Activated CD4-positive, alpha-beta T cell treated with anti-CD3 and anti-CD28 coated beads for 36 hours (primary cell): ENCODE measurements at regions of chr17 and their contacts with region 1.

Region 1: GRCh38 chr17:78019367-78019975 is 61.0 kb downstream of the TNRC6C start:
- DNase-seq: no peak
- ATAC-seq: no peak
- H3K4me3 Mint-ChIP-seq: no peak overlapping the region
- H3K27ac Mint-ChIP-seq: peak overlapping the region; percentile 35
- H3K4me1 Mint-ChIP-seq: peaks cover 33% of the 10 kb centered on the region
- H3K27me3 Mint-ChIP-seq: no peaks in the 10 kb centered on the region

Region 2: GRCh38 chr17:77834170-77835115 is 185.0 kb before region 1 on chr17:
- CTCF ChIA-PET with region 1: no interaction called
- POLR2A ChIA-PET with region 1: no interaction called
- intact Hi-C with region 1: loop called in 1 of 2 experiments (anchors 1 kb)
- DNase-seq: peak; percentile 88
- ATAC-seq: peak; percentile 79
- H3K4me3 Mint-ChIP-seq: no peak overlapping the region
- H3K27ac Mint-ChIP-seq: peak overlapping the region; percentile 3
- H3K4me1 Mint-ChIP-seq: peaks cover 51% of the 10 kb centered on the region
- H3K27me3 Mint-ChIP-seq: peaks cover 3% of the 10 kb centered on the region

Region 3: GRCh38 chr17:78005452-78006171 is 13.9 kb before region 1 on chr17:
- CTCF ChIA-PET with region 1: interaction called, 26 read pairs
- POLR2A ChIA-PET with region 1: no interaction called
- intact Hi-C with region 1: no loop called
- DNase-seq: no peak
- ATAC-seq: peak; percentile 90
- H3K4me3 Mint-ChIP-seq: no peak overlapping the region
- H3K27ac Mint-ChIP-seq: no peak overlapping the region
- H3K4me1 Mint-ChIP-seq: peaks cover 48% of the 10 kb centered on the region
- H3K27me3 Mint-ChIP-seq: no peaks in the 10 kb centered on the region

Region 4: DNA sequence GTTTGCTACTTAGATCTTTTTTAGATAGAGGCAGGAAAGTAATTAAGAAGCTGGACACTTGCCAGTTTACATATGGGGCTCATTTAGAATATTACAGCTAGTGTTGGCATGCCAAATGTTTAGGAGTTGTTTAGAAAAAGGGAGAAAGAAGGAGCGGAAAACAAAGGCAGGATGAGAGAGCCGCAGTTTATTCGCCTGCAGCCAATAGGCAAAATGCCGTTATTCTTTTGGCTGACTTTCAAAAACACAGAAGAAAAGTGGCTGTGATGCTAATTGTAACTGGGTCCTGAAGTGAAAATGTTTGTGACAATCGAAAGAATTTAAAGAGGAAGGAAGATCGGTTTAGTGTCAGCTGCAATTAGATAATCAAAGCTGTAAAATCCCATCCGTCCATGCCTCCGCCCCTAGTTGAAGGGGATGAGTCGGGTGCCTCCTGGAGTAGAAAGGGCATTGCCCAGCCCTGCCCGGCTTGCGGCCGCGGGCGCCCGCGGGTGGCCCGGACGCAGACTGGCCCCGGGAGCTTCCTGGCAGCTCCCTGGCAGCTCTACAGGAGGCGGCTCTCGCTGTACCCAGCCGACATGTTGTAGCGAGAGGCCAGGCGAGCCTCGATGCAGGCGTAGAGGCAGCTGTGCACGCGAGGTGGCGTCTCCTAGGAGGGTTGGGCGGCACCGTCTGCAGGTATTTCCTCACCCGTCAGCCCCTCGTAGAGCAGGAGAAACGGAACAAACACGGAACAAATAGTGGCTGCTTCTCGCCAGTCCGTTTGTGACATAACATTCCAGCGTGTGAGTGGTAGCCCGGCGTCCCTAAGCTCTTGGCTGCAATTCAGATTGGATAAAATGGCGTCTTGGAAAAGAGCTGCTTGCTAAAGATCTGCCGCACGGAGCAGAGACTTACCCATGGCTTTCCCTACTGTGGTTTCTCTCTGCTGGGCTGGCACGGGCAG is 21.2 kb after region 1 on chr17:
- CTCF ChIA-PET with region 1: interaction called, 21 read pairs
- POLR2A ChIA-PET with region 1: no interaction called
- intact Hi-C with region 1: no loop called
- DNase-seq: peak; percentile 53
- ATAC-seq: peak; percentile 86
- H3K4me3 Mint-ChIP-seq: peak overlapping the region; percentile 70
- H3K27ac Mint-ChIP-seq: peak overlapping the region; percentile 64
- H3K4me1 Mint-ChIP-seq: peaks cover 21% of the 10 kb centered on the region
- H3K27me3 Mint-ChIP-seq: no peaks in the 10 kb centered on the region

Region 5: GRCh38 chr17:78133971-78134898 is 114.8 kb after region 1 on chr17:
- CTCF ChIA-PET with region 1: interaction called, 9 read pairs
- POLR2A ChIA-PET with region 1: no interaction called
- intact Hi-C with region 1: loop called in 1 of 2 experiments (anchors 1 kb)
- DNase-seq: peak; percentile 88
- ATAC-seq: peak; percentile 21
- H3K4me3 Mint-ChIP-seq: peak overlapping the region; percentile 94
- H3K27ac Mint-ChIP-seq: peak overlapping the region; percentile 73
- H3K4me1 Mint-ChIP-seq: peaks cover 72% of the 10 kb centered on the region
- H3K27me3 Mint-ChIP-seq: no peaks in the 10 kb centered on the region